Right lobe of liver (tissue), 6 donors: ENCODE measurements at regions of chr16 and their contacts with region 1.

Region 1: GRCh38 chr16:85821441-85822135 is 22.1 kb downstream of the COX4I1 start:
- DNase-seq: peak; percentile 82 to 86 (median 83)
- ATAC-seq: peak; percentile 97 to 99 (median 98)
- H3K4me3 ChIP-seq: no peak overlapping the region
- H3K27ac ChIP-seq: no peak overlapping the region
- H3K4me1 ChIP-seq: no peaks in the 10 kb centered on the region
- H3K27me3 ChIP-seq: no peaks in the 10 kb centered on the region
- CTCF ChIP-seq: peak; percentile 96 to 100 (median 98)
- POLR2A ChIP-seq: no peak

Region 2: DNA sequence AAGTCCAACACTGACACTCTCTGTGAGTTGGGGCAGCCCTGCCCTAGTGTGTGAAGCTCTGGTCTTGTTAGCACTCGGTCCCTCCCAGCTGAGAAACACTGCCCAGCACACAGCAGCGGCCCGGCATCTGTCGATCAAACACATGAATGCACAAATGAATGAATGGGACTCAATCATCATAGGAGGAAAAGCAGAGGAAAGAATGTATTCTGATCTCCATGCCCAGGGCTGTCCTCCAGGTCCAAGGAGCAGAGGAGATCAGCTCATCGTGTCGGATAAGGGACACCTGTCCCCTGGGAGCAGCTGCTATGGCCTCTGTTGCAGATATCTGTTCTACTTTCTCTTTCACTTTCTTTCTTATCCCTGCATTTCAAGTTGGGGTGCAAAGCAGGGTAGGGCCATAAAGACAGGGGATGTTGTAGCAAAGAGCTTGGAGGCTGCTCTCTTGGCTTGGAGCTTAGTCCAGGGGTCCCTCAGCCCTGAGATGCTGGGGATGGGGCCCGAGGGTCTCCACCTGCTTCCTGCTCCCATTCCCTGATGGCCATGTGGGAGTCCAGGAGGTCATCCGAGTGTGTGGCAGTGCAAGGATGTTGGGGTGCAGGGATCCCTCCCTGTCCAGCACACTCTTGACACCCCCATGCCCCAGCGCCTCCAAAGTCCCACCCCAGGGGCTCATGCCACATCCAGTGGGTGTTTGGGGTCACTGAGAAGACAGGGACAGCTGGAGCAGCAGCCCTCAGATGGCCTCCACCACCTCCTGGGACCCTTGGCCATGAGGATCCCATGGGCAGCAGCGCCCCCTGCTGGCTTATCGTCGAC is 165.6 kb after region 1 on chr16:
- intact Hi-C with region 1: loop called (anchors 5 kb)
- DNase-seq: peak; percentile 42 to 63 (median 56)
- ATAC-seq: peak; percentile 66 to 79 (median 74)
- H3K4me3 ChIP-seq: peak overlapping the region; percentile 10 to 40 (median 37)
- H3K27ac ChIP-seq: peak overlapping the region in 1 of 3 donors; percentile 52
- H3K4me1 ChIP-seq: peaks cover 0 to 11% (median 3%) of the 10 kb centered on the region in 4 donors
- H3K27me3 ChIP-seq: no peaks in the 10 kb centered on the region
- CTCF ChIP-seq: peak; percentile 25 to 57 (median 54)
- POLR2A ChIP-seq: no peak

Region 3: DNA sequence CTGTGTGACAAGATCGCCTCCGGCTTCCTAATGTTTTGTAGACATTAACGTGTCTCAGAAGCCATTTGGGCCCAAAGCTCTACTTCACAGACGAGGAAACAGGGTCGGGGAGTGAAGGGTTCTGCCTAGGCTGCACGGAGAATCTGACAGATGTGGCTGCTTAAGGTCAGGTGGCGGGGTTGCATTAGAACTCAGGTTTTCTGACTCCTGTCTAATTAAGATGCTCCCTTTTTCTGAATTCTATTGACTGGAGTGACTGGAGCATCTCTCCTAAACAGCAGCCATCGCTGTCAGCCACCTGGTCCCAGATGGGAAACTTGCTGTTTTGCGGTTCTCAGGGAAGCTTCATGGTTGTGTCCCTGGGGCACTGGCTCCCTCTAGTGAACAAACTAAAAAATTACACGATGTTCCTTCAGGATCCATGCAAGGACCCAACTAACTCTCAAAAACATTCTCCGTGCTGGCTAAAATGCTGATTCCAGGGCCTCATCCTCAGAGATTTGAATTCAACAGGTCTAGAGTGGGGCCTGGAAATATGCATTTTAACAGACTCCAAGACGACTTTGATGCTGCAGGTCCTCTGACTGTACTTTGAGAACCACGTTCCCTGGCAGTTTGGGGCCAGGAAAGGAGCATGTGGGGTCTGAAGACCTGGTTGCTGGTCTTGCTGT is 194.7 kb after region 1 on chr16:
- intact Hi-C with region 1: loop called in 1 of 2 experiments (anchors 10 kb)
- DNase-seq: no peak
- ATAC-seq: peak; percentile 84 to 91 (median 88)
- H3K4me3 ChIP-seq: no peak overlapping the region
- H3K27ac ChIP-seq: no peak overlapping the region
- H3K4me1 ChIP-seq: no peaks in the 10 kb centered on the region
- H3K27me3 ChIP-seq: no peaks in the 10 kb centered on the region
- CTCF ChIP-seq: peak; percentile 68 to 83 (median 74)
- POLR2A ChIP-seq: no peak